ENCODE measurements at regions of chr22 and their contacts with region 1.

Region 1: DNA sequence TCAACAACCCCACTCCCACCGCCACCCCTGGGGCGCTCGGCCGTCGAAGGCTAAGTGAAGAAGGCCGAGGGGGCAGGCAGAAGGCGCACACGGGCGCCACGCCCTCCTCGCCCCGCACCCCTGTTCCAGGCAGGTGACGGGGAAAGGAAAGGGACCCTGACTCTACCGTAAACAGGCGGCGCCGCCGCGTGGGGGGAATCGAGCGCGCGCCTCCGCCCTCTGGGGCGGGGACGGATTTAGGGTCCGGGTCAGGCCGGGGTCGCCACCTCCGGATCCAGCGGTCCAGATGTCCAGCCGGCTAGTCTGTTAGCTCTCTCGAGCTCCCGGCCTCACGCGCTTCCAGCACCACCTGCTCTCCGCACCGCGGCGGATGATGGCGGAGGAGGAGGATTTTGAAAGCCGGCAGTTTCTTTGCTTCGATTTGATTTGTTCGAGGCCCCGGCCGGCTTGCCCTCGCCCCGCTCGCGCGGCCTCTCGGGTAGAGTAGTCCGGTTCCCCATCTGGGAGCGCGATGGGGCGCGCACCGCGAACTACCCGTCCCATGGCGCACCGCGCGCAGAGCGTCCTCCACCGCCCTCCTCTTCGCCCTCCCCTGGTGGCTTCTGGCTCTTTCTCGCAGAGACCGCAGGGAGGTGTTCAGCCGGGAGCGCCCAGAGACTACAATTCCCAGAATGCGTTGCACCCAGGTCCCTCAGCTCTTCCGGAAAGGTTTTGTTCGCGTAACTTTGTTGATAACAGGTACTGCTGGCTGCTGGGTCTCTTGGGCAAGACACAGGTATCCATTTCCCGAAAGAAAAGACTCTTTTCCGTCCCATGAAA is at the start of gene RANGAP1:
- DNase-seq: peak; percentile 99
- H3K4me3 Mint-ChIP-seq: peak within 1 kb of the TSS; percentile 98
- H3K27ac Mint-ChIP-seq: peak within 1 kb of the TSS; percentile 99
- H3K4me1 Mint-ChIP-seq: peaks cover 25% of the 10 kb centered on the region
- H3K27me3 Mint-ChIP-seq: no peaks in the 10 kb centered on the region
- total RNA-seq, gene RANGAP1: 154 to 156 TPM

Region 2: GRCh38 chr22:40856513-40857308 is 429.3 kb before region 1 on chr22 and contains the starts of genes ST13 and XPNPEP3:
- CTCF ChIA-PET with region 1: no interaction called
- POLR2A ChIA-PET with region 1: no interaction called
- intact Hi-C with region 1: loop called (anchors 5 kb)
- DNase-seq: peak; percentile 98
- H3K4me3 Mint-ChIP-seq: peak within 1 kb of the TSS; percentile 98
- H3K27ac Mint-ChIP-seq: peak within 1 kb of the TSS; percentile 99
- H3K4me1 Mint-ChIP-seq: peaks cover 48% of the 10 kb centered on the region
- H3K27me3 Mint-ChIP-seq: no peaks in the 10 kb centered on the region
- total RNA-seq, gene ST13: 240 to 263 TPM
- total RNA-seq, gene XPNPEP3: 19.4 to 20.1 TPM

Region 3: GRCh38 chr22:41070665-41071331 is 215.2 kb before region 1 on chr22:
- CTCF ChIA-PET with region 1: no interaction called
- POLR2A ChIA-PET with region 1: no interaction called
- intact Hi-C with region 1: loop called (anchors 1 kb)
- DNase-seq: no peak
- H3K4me3 Mint-ChIP-seq: no peak overlapping the region
- H3K27ac Mint-ChIP-seq: no peak overlapping the region
- H3K4me1 Mint-ChIP-seq: peaks cover 9% of the 10 kb centered on the region
- H3K27me3 Mint-ChIP-seq: no peaks in the 10 kb centered on the region

Region 4: DNA sequence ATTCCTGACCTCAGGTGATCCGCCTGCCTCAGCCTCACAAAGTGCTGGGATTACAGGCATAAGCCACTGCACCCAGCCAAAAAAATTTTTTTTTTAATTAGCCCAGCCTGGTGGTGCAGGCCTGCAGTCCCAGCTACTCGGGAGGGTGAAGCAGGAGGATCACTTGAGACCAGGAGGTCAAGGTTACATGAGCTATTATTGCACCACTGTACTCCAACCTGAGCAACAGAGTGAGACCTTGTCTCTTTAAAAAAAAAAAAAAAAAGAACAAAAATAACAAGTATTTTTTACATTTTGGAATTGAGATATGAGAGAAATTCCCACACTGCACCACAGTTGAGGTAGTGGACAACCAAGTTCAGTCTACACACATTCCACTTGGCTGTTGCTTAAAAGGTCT is 94.6 kb before region 1 on chr22:
- CTCF ChIA-PET with region 1: no interaction called
- POLR2A ChIA-PET with region 1: no interaction called
- intact Hi-C with region 1: no loop called
- DNase-seq: no peak
- H3K4me3 Mint-ChIP-seq: no peak overlapping the region
- H3K27ac Mint-ChIP-seq: no peak overlapping the region
- H3K4me1 Mint-ChIP-seq: no peaks in the 10 kb centered on the region
- H3K27me3 Mint-ChIP-seq: no peaks in the 10 kb centered on the region

Region 5: GRCh38 chr22:41204992-41205900 is 80.8 kb before region 1 on chr22 and contains the start of gene L3MBTL2:
- CTCF ChIA-PET with region 1: no interaction called
- POLR2A ChIA-PET with region 1: no interaction called
- intact Hi-C with region 1: loop called (anchors 5 kb)
- DNase-seq: peak; percentile 99
- H3K4me3 Mint-ChIP-seq: peak within 1 kb of the TSS; percentile 95
- H3K27ac Mint-ChIP-seq: peak within 1 kb of the TSS; percentile 92
- H3K4me1 Mint-ChIP-seq: peaks cover 26% of the 10 kb centered on the region
- H3K27me3 Mint-ChIP-seq: no peaks in the 10 kb centered on the region
- total RNA-seq, gene L3MBTL2: 27.3 to 31.0 TPM

Region 6: GRCh38 chr22:41381329-41382097 is 95.5 kb after region 1 on chr22 and contains the start of gene TEF:
- CTCF ChIA-PET with region 1: no interaction called
- POLR2A ChIA-PET with region 1: interaction called, 4 read pairs
- intact Hi-C with region 1: loop called (anchors 1 kb)
- DNase-seq: peak; percentile 98
- H3K4me3 Mint-ChIP-seq: peak within 1 kb of the TSS; percentile 81
- H3K27ac Mint-ChIP-seq: peak within 1 kb of the TSS; percentile 86
- H3K4me1 Mint-ChIP-seq: peaks cover 15% of the 10 kb centered on the region
- H3K27me3 Mint-ChIP-seq: no peaks in the 10 kb centered on the region
- total RNA-seq, gene TEF: 1.4 to 1.6 TPM

Region 7: DNA sequence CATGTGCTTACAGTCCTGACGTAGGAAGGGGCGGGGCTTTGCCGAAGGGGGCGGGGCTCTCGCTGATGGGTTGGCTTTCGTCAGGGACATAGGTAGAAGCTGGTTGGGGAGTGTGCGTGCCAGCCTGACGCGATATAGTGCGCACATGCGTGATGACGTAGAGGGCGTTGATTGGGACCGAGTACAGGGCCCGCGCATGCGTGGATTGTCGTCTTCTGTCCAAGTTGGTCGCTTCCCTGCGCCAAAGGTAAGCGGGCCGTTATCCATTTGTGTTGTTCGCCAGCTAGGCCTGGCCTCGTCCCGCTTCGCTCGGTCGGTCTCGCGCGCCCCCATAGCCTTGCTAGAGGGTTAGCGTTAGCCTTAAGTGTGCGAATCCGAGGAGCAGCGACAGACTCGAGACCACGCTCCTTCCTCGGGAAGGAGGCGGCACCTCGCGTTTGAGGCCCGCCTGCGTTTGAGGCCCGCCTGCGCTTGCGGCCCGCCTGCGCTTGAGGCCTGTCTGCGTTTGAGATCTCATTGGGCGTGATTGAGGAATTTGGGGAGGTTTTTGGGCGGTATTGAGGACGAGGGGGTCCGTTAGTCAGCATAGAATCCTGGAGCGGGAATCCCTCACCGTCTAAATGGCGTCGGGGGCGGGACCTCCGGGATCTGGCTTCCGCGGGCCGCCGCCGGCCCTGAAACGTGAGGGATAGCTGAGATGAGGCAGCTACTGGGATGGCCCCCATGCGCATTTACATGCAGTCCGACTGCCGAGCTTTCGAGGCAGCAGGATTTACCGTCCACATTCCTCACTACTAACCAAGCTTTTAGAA is 335.3 kb after region 1 on chr22 and contains the start of gene XRCC6:
- CTCF ChIA-PET with region 1: no interaction called
- POLR2A ChIA-PET with region 1: interaction called, 3 read pairs
- intact Hi-C with region 1: loop called (anchors 5 kb)
- DNase-seq: peak; percentile 100
- H3K4me3 Mint-ChIP-seq: peak within 1 kb of the TSS; percentile 97
- H3K27ac Mint-ChIP-seq: peak within 1 kb of the TSS; percentile 98
- H3K4me1 Mint-ChIP-seq: peaks cover 40% of the 10 kb centered on the region
- H3K27me3 Mint-ChIP-seq: no peaks in the 10 kb centered on the region
- total RNA-seq, gene XRCC6: 403 to 409 TPM